GM23248 (cell line): ENCODE measurements at regions of chr15 and their contacts with region 1.

Region 1: DNA sequence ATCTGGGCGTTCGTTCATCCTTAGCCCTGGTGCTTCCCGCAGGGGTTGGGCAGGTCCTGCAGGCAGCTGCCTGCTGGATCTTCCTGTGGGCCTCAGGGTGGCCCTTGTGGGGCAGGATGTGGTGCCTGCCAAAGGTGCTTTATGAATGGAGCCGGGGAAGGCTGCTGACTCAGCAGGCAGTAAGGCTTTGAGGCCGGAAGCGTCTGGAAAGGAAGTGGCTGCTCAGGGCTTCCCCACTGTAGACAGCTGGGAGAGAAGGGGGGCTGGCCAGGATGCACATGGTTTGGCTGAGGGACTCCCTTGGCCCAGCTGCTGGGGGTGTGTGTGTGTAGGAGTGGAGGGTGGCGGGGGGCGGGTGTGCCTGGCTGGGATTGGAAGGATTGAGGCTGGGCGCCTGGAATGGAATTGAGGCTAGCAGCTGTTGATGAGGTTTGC is 12.9 kb downstream of the CD276 start:
- DNase-seq: peak; percentile 93
- H3K4me3 ChIP-seq: no peak overlapping the region
- H3K27ac ChIP-seq: peak overlapping the region; percentile 17; the same call in 1 of the 2 replicates
- H3K4me1 ChIP-seq: peaks cover 34% of the 10 kb centered on the region
- H3K27me3 ChIP-seq: no peaks in the 10 kb centered on the region

Region 2: DNA sequence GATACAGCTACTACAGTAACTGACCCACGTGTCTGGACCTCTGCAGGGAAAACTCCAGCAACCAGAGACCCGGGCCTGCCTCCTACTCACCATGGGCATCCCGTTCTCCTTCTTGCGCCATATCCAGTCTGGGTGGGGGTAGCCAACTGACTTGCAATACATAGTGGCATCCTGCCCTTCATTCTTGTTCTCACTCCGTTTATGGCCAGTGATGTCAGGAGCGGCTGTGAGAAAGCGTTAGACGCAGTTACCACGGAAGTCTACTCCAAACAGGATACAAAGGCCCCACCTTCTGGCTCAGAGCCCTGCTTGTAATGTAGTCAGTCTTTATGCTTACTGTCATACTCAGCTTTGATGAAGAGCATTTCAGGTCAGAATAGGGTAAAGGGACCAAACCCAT is 123.5 kb before region 1 on chr15:
- in situ Hi-C with region 1: loop called (anchors 10 kb)
- DNase-seq: peak; percentile 43
- H3K4me3 ChIP-seq: no peak overlapping the region
- H3K27ac ChIP-seq: no peak overlapping the region
- H3K4me1 ChIP-seq: 0 out of 2 replicates have a peak, but pooled peaks cover 3% of the 10 kb centered on the region
- H3K27me3 ChIP-seq: no peaks in the 10 kb centered on the region